Activated B cell treated with CpG ODN at 0.5 μM for 24 hours (primary cell): ENCODE measurements at regions of chr15 and their contacts with region 1.

Region 1: DNA sequence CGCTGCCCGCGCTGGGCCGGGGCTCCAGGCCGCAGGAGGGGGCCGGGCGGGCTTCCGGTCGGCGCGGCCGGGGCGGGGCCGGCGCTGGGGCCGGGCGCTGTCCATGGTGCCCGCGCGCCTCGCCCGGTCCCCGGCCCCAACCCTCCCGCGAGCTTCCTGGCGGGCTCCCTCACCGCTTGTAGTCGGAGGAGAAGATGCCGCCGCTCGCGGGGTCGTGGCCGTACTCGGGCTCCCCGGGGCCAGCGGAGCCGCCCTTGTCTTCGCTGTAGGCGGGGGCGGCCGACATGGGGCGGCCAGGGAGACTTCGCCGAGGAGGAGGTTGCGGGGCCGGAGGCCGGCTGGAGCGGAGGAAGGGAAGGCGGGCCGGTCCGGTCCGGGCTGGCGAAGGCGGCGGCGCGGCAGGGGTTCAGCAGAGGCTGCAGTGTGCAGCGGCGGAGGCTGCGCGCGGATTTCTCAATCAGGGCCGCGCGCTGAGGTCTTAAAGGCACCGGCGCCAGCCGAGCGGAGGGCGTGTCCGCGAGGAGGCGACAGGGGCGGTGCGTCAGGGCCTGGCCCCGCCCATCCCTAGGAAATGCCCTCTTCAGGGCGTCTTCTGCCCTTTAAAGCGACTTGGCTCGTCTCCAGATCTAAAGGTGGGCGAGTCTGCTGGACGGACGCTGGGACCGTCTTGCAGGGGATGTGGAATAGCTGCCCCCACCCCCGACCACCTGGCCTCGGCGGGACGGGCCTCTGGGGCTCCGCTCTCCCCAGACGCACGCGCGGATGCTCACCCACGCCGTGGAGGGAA is at the start of gene AP3B2:
- DNase-seq: peak; percentile 67
- ATAC-seq: peak; percentile 93
- H3K4me3 Mint-ChIP-seq: peak within 1 kb of the TSS; percentile 77
- H3K27ac Mint-ChIP-seq: no peak within 1 kb of the TSS
- H3K4me1 Mint-ChIP-seq: no peaks in the 10 kb centered on the region
- H3K27me3 Mint-ChIP-seq: peaks cover 29% of the 10 kb centered on the region
- CTCF ChIP-seq: no peak
- total RNA-seq, gene AP3B2: 0.22 and 0.46 TPM in 2 replicates

Region 2: DNA sequence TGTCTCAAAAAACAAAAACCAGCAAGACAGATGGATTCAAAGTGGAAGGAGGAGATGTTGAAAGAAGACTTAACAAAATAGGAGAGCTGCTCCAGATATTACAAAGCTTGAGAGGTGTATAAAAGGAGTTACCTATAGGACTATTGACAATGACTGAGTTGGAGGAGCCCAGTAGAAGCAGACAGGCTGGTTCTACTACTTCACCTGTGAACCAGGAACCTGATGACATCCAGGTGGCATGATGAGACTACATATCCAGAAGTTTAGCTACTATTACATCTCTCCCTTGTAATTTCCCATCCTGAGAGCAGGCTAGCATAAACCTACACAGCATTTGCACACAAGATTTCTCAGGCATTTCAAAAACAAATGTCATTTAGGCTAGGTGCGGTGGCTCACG is 111.8 kb before region 1 on chr15:
- CTCF ChIA-PET with region 1: no interaction called
- POLR2A ChIA-PET with region 1: no interaction called
- intact Hi-C with region 1: no loop called
- DNase-seq: no peak
- ATAC-seq: no peak
- H3K4me3 Mint-ChIP-seq: no peak overlapping the region
- H3K27ac Mint-ChIP-seq: no peak overlapping the region
- H3K4me1 Mint-ChIP-seq: no peaks in the 10 kb centered on the region
- H3K27me3 Mint-ChIP-seq: peaks cover 39% of the 10 kb centered on the region
- CTCF ChIP-seq: no peak

Region 3: GRCh38 chr15:82749951-82750830 is 40.6 kb after region 1 on chr15:
- CTCF ChIA-PET with region 1: no interaction called
- POLR2A ChIA-PET with region 1: interaction called, 3 read pairs
- intact Hi-C with region 1: loop called (anchors 1 kb)
- DNase-seq: peak; percentile 76
- ATAC-seq: peak; percentile 95
- H3K4me3 Mint-ChIP-seq: peak overlapping the region; percentile 100
- H3K27ac Mint-ChIP-seq: peak overlapping the region; percentile 94
- H3K4me1 Mint-ChIP-seq: peaks cover 44% of the 10 kb centered on the region
- H3K27me3 Mint-ChIP-seq: no peaks in the 10 kb centered on the region
- CTCF ChIP-seq: no peak

Region 4: GRCh38 chr15:82952158-82953081 is 242.8 kb after region 1 on chr15 and contains the start of gene HOMER2:
- CTCF ChIA-PET with region 1: no interaction called
- POLR2A ChIA-PET with region 1: no interaction called
- intact Hi-C with region 1: no loop called
- DNase-seq: peak; percentile 26
- ATAC-seq: peak; percentile 70
- H3K4me3 Mint-ChIP-seq: peak within 1 kb of the TSS; percentile 74
- H3K27ac Mint-ChIP-seq: peak within 1 kb of the TSS; percentile 8
- H3K4me1 Mint-ChIP-seq: peaks cover 3% of the 10 kb centered on the region
- H3K27me3 Mint-ChIP-seq: peaks cover 8% of the 10 kb centered on the region
- CTCF ChIP-seq: no peak
- total RNA-seq, gene HOMER2: 9.2 and 9.4 TPM in 2 replicates

Region 5: GRCh38 chr15:83475551-83475950 is 765.9 kb after region 1 on chr15:
- CTCF ChIA-PET with region 1: no interaction called
- POLR2A ChIA-PET with region 1: no interaction called
- intact Hi-C with region 1: no loop called
- DNase-seq: no peak
- ATAC-seq: no peak
- H3K4me3 Mint-ChIP-seq: no peak overlapping the region
- H3K27ac Mint-ChIP-seq: no peak overlapping the region
- H3K4me1 Mint-ChIP-seq: no peaks in the 10 kb centered on the region
- H3K27me3 Mint-ChIP-seq: peaks cover 4% of the 10 kb centered on the region
- CTCF ChIP-seq: no peak